Posterior vena cava (tissue), 2 donors: ENCODE measurements at regions of chr1 and their contacts with region 1.

Region 1: DNA sequence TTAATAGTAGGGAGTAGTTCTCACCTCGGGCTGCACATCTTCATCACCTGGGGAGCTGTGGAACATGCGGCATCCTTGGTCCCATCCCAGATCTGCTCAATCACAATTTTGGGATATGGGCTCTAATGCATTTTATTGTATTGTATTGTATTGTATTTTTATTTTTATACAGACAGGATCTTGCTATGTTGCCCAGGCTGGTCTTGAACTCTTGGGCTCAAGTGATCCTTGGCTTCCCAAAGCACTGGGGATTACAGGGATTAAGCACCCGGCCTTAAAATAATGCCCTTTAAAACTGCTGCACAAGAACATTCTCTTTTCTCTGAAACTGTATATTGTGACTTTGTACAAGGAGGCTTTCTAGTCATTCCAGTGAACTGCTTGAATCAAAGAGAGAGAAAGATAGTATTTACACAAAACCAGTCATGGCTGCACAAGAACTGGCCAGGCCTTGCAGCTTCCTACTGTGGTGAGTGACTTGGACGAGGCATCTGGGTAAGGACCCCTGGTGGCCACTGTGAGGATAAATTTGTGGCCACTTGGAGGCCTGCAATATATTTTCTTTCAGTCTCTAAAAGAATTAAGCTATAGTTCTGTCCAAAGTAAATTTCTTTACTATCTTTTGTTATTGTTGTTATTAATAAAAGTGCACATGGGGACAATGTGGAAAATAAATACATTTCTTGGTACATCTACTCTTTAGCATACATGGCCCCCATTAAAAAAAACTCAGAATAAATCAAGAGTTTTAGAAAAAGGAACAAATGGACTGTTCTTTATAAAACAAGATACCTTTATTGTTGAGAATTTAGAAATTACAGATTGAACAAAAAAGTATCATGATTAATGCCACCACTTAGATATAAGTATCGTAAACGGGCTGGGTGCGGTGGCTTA is 48.0 kb downstream of the TBCE start:
- DNase-seq: peak; percentile 85

Region 2: GRCh38 chr1:235253219-235253962 is 161.9 kb before region 1 on chr1:
- intact Hi-C with region 1: loop called in 1 of 2 experiments (anchors 5 kb)
- DNase-seq: no peak

Region 3: GRCh38 chr1:235391874-235392273 is 23.4 kb before region 1 on chr1:
- intact Hi-C with region 1: loop called in 1 of 2 experiments (anchors 1 kb)
- DNase-seq: no peak